Activated B cell treated with CpG ODN at 0.5 μM for 24 hours (primary cell): ENCODE measurements at regions of chr1 and their contacts with region 1.

Region 1: GRCh38 chr1:64136752-64137411 is 66.5 kb upstream of the UBE2U start:
- DNase-seq: peak; percentile 39
- ATAC-seq: peak; percentile 73
- H3K4me3 Mint-ChIP-seq: no peak overlapping the region
- H3K27ac Mint-ChIP-seq: no peak overlapping the region
- H3K4me1 Mint-ChIP-seq: no peaks in the 10 kb centered on the region
- H3K27me3 Mint-ChIP-seq: peaks cover 5% of the 10 kb centered on the region
- CTCF ChIP-seq: peak; percentile 34

Region 2: DNA sequence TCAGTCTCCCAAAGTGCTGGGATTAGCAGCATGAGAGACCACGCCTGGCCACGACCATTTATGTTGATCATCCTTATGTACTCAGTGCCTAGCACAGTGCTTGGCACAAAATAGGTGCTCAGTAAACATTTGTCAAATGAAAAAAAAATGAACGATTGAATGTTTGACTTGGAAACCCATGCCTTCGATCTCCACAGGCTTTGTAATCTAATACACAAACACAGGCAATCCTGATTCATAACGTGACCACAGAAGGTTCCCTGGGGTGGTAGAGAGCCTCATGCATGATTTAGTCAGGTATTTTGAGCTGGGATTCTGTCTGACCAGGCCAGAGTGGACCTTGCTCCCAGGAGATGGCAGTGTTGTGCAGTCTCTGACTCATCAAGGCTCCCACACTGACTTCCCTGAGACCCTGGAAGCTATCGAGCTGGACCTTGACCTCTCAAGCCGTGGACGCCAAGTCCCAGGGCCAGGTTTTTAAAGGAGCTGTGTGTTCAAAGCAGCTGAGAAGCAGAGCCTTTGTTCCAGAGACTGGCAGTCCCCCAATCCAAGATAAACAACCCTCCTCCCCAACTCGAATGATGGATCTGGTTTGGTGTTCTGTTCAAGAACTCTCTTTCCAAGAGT is 462.5 kb before region 1 on chr1:
- CTCF ChIA-PET with region 1: interaction called, 8 read pairs
- POLR2A ChIA-PET with region 1: no interaction called
- intact Hi-C with region 1: loop called (anchors 1 kb)
- DNase-seq: no peak
- ATAC-seq: no peak
- H3K4me3 Mint-ChIP-seq: no peak overlapping the region
- H3K27ac Mint-ChIP-seq: no peak overlapping the region
- H3K4me1 Mint-ChIP-seq: no peaks in the 10 kb centered on the region
- H3K27me3 Mint-ChIP-seq: no peaks in the 10 kb centered on the region
- CTCF ChIP-seq: no peak

Region 3: DNA sequence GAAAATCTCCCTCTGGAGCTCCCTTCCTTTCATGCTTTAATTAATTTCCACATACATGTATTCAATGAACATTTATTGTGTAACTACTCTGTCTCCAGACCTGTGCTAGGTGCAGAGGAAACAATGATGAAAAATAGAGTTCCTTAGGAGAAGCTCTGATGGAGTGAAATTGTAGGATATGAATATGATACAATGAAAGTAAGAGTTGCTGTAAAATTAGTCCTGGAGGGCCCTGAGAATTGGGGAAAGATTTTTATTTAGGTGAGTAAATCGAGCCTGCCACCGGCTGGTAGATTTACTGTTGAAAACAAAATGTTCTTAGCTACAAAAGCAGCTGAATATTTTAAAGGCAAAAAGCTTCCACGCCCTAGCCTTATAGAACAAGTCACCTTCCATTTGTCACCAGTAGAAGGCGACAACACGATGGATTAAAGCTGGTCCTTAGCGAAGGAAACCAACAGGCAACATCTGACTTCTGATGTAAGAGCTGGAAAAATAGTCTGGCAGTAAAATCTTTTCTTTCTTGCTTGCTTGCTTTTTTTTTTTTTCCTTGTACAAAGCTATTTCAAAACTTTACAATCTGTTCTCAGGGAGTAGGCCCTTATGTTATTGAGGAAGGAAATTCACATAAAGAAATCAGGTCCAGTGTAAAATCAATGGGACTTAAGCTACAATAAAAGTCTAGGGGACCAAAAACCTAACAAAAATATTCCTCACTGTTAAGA is 445.0 kb before region 1 on chr1:
- CTCF ChIA-PET with region 1: interaction called, 60 read pairs
- POLR2A ChIA-PET with region 1: no interaction called
- intact Hi-C with region 1: loop called (anchors 1 kb)
- DNase-seq: no peak
- ATAC-seq: peak; percentile 57
- H3K4me3 Mint-ChIP-seq: no peak overlapping the region
- H3K27ac Mint-ChIP-seq: no peak overlapping the region
- H3K4me1 Mint-ChIP-seq: no peaks in the 10 kb centered on the region
- H3K27me3 Mint-ChIP-seq: peaks cover 8% of the 10 kb centered on the region
- CTCF ChIP-seq: no peak

Region 4: GRCh38 chr1:63773815-63774616 is 362.9 kb before region 1 on chr1 and contains the start of gene ROR1:
- CTCF ChIA-PET with region 1: interaction called, 7 read pairs
- POLR2A ChIA-PET with region 1: no interaction called
- intact Hi-C with region 1: loop called (anchors 1 kb)
- DNase-seq: peak; percentile 53
- ATAC-seq: peak; percentile 96
- H3K4me3 Mint-ChIP-seq: peak within 1 kb of the TSS; percentile 85
- H3K27ac Mint-ChIP-seq: no peak within 1 kb of the TSS
- H3K4me1 Mint-ChIP-seq: peaks cover 22% of the 10 kb centered on the region
- H3K27me3 Mint-ChIP-seq: peaks cover 40% of the 10 kb centered on the region
- CTCF ChIP-seq: no peak
- total RNA-seq, gene ROR1: 1.8 and 2.2 TPM in 2 replicates

Region 5: DNA sequence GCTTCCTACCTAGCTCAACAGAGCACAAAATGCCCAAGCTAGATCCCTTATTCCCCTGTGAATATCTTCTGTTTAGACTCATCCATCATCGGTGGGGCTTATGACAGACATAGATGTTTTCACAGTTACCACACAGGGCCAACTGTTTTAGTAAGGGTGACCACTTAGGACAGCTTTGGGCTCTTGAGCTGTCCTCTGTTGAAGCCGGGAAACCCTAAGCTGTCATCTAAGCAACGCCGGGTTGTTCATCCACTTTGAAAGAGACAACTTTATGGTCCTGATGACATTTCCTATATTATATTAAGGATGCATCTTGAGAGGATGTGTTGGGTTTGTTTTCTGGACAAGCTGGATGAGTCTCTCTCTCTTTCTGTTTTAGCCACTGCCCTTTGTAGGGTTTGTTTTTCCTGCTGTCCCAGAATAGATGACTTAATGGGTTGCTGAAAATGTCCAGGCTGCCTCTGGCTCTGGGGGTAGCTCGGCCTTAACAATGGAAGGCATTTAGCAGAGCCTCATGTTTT is 44.0 kb before region 1 on chr1:
- CTCF ChIA-PET with region 1: no interaction called
- POLR2A ChIA-PET with region 1: no interaction called
- intact Hi-C with region 1: no loop called
- DNase-seq: no peak
- ATAC-seq: no peak
- H3K4me3 Mint-ChIP-seq: no peak overlapping the region
- H3K27ac Mint-ChIP-seq: no peak overlapping the region
- H3K4me1 Mint-ChIP-seq: no peaks in the 10 kb centered on the region
- H3K27me3 Mint-ChIP-seq: peaks cover 5% of the 10 kb centered on the region
- CTCF ChIP-seq: no peak